ENCODE measurements at regions of chr6 and their contacts with region 1.

Region 1: GRCh38 chr6:42745707-42746462 is at the start of gene TBCC:
- DNase-seq: peak; percentile 91
- H3K4me3 Mint-ChIP-seq: peak within 1 kb of the TSS; percentile 100
- H3K27ac Mint-ChIP-seq: peak within 1 kb of the TSS; percentile 100
- H3K4me1 Mint-ChIP-seq: peaks cover 32% of the 10 kb centered on the region
- H3K27me3 Mint-ChIP-seq: no peaks in the 10 kb centered on the region
- total RNA-seq, gene TBCC: 20.1 and 22.3 TPM in 2 replicates

Region 2: DNA sequence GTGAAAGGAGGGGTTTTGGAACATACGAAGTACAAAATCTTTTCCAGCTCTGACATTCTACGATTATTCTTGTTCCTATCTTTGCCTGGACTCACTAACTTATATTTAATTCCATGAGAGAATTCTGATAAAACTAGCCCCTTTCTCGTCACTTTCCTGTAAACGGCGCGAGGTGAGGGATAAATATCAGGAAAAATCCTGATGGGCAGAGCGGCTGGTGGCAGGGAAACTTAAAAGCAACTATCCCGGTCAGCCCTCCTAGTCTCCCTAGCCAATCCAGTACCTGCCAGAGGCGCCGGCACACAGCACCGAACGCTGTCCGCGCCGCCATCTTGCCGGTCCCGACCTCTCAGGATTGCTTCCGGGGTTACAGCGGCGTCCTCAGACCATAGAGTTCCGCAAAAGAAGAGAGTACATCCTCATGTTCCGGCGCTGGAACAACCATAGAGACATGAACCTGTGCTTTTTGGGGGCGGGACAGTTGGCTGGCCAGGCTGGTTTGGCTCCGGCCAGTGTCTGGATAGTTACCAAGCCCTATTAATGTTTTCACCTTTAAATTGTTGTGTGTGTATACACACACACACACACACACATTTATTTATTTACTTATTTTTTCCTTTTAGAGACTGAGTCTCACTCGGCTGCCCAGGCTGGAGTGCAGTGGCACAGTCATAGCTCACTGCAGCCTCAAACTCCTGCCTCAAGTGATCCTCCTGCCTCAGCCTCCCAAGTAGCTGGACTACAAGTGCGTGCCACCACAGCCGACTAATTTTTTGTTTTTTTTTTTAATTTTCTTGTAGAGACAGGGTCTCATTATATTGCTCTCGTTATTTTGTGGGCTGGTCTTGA is 528.1 kb before region 1 on chr6 and contains the start of gene MRPS10:
- intact Hi-C with region 1: loop called (anchors 2 kb)
- DNase-seq: peak; percentile 89
- H3K4me3 Mint-ChIP-seq: peak within 1 kb of the TSS; percentile 96
- H3K27ac Mint-ChIP-seq: peak within 1 kb of the TSS; percentile 89
- H3K4me1 Mint-ChIP-seq: peaks cover 20% of the 10 kb centered on the region
- H3K27me3 Mint-ChIP-seq: no peaks in the 10 kb centered on the region
- total RNA-seq, gene MRPS10: 48.8 and 49.7 TPM in 2 replicates

Region 3: GRCh38 chr6:42771741-42772100 is 25.8 kb after region 1 on chr6:
- intact Hi-C with region 1: loop called (anchors 1 kb)
- DNase-seq: no peak
- H3K4me3 Mint-ChIP-seq: peak overlapping the region; percentile 74
- H3K27ac Mint-ChIP-seq: peak overlapping the region; percentile 100
- H3K4me1 Mint-ChIP-seq: peaks cover 55% of the 10 kb centered on the region
- H3K27me3 Mint-ChIP-seq: no peaks in the 10 kb centered on the region

Region 4: DNA sequence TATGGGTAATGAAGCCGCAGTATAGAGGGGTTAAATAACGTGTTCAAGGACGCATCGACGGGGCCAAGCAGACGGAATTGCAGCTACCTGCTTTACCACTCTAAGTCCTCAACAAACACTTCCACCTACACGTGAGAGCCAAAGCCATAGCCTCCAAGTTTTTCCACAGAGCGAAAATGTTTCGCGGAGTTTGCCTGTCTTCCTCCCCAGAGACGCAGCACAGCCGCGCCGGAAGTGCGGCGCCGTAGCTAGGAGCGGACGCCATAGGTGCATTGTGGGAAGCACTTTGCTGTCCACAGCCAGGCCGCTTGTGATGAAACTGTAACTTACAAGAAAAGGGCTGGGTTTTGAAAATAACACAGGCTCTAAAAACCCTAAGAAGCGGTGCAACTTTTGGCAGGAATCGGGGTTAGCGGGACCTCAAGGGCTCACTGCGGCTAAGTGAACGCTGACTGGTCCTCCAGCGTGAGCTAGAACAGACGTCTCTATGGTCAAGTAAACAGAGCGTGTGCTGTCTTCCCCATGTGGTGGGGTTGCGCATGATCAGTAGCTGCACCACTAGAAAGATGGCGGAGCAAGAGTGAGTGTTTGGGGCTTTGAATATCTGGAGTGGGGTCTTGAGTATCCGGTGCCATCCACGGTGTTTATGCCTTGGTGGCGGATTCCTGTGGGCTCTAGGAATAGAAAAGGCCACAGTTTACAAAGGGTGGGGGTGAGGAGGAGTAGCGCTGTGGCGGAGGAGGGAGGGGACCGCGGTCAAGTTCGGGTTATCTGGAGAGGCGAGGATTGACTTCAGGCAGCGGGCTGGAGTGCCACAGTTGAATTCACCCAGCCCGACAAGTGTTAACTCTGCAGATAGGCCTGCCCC is 133.7 kb after region 1 on chr6 and contains the start of gene RPL7L1:
- intact Hi-C with region 1: loop called (anchors 1 kb)
- DNase-seq: peak; percentile 82
- H3K4me3 Mint-ChIP-seq: peak within 1 kb of the TSS; percentile 96
- H3K27ac Mint-ChIP-seq: peak within 1 kb of the TSS; percentile 97
- H3K4me1 Mint-ChIP-seq: peaks cover 30% of the 10 kb centered on the region
- H3K27me3 Mint-ChIP-seq: no peaks in the 10 kb centered on the region
- total RNA-seq, gene RPL7L1: 179 TPM in 2 replicates

Region 5: DNA sequence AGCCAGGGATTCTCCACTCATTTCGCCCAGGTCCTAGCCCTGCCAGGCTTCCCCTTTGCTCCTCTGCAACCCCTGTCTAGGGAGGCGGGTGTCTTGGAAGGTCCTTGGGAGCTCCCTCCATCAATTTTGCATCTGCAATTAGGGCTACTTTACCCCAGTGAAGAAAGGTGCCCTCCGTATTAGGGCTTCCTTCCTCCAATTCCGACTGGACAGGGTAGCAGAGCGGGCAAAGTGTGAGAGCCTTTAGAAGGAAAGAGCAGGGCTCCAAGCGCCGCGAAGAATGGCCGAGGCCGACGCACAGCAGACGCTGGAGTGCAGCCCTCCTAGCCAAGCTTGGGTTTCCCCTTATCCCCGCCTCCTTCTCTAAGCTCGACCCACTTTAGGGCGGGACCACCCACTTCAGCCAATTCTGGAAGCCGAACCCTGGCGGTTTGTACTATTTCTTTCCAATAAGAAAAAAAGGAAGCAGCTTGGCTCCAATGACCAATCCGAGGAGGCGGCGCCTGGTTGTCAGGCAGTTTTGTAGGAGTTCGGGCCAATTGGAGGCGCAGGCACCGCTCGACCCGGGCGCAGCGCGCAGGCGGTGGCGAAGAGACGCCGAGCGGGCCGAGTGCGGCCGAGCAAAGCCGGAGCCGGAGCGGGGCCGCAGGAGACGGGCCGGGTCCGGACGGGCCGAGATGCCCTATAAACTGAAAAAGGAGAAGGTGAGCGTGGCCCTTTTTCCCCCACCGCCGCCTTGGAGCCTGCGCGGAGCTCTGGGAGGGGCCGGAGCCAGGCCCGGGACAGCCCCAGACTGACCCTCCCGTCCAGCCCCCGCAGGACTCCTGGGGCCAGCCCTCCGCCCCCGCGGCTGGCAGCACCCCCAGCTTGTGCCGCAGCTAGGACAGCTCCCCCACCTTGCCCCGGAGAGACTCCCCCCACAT is 238.4 kb after region 1 on chr6 and contains the start of gene PPP2R5D:
- intact Hi-C with region 1: loop called (anchors 10 kb)
- DNase-seq: peak; percentile 97
- H3K4me3 Mint-ChIP-seq: peak within 1 kb of the TSS; percentile 92
- H3K27ac Mint-ChIP-seq: peak within 1 kb of the TSS; percentile 94
- H3K4me1 Mint-ChIP-seq: peaks cover 57% of the 10 kb centered on the region
- H3K27me3 Mint-ChIP-seq: no peaks in the 10 kb centered on the region
- total RNA-seq, gene PPP2R5D: 52.1 and 53.4 TPM in 2 replicates

Region 6: DNA sequence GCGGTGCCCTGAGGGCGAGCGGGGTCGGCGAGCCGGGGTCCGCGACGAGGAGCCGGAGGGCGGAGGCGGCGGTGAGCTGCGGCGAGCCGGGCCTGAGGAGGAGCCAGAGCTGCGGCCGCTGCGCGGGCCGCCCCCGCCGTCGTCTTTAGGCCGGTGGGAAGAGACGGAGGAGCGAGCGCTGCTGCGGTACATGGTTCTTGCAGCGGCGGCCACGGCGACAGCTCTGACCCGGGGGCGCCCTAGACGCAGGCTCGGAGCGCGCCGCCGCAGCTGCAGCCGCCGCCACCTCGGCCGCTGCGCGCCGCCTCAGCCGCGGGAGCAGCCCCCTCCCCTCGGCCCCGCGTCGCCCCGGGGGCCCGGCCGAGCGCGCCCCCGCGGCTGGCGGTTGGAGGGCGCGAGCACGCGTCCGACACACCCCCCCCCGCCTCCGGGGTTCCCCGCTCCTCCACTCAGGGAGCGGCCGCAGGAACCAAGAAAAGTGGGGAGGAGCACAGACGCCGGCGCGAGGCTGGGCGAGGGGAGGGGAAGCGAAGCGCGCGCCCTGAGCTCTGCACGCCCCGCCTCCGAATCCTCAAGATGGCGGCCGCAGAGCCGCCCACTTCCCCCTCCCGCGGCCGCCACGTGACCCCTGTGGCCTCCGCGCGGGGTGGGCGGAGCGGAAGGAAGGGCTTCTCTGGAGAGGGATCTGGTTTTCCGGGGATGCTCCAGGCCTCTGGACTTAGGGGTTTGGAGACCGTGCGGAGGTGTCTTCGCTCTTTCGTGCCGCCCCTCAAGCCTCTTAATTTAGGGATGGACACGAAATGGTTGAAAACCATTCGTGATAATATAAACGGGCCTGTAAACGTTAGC is 623.5 kb after region 1 on chr6 and contains the start of gene ZNF318:
- intact Hi-C with region 1: loop called (anchors 1 kb)
- DNase-seq: peak; percentile 93
- H3K4me3 Mint-ChIP-seq: peak within 1 kb of the TSS; percentile 86
- H3K27ac Mint-ChIP-seq: peak within 1 kb of the TSS; percentile 91
- H3K4me1 Mint-ChIP-seq: peaks cover 36% of the 10 kb centered on the region
- H3K27me3 Mint-ChIP-seq: peaks cover 2% of the 10 kb centered on the region
- total RNA-seq, gene ZNF318: 9.1 and 9.7 TPM in 2 replicates